ENCODE measurements at regions of chr20 and their contacts with region 1.

Region 1: GRCh38 chr20:56551571-56551970 is 18.5 kb downstream of the FAM209B start:
- DNase-seq: no peak
- ATAC-seq: no peak

Region 2: DNA sequence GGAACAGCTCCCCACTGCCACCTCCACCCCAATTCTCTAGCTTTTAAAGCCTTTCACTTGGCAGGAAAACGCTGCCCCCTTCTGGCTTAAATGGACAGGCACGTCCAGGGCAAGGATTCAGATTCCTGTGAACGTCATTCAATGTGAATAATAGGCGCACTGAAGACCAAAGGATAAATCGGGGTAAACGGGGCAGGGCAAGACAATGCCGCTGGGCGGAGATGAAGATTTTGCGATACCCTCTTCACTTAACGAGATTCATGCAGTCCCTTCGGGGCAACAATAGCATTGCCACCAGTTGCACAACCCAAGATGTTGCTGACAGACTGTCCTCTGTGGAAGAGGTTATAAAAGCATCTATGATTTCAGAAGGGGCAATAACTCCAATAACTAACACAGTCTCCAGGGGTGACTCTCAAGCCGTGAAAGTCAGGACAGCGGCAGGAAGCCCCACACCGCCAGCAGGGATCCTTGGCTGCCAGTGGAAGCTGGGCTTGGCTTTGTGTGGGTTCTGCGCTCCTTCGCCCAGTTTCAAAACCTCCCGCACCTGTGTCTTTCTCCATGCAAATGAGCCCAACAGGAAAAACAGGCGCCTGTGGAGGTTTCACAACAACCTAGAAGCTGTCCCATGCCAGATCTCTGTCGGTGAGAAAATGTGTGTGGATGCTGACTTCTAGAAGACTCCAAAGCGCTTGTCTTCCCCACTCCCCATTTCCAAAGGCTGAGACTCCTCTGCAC is 423.1 kb after region 1 on chr20:
- intact Hi-C with region 1: loop called in 1 of 2 experiments (anchors 2 kb)
- DNase-seq: peak; percentile 38 to 59
- ATAC-seq: peak; percentile 35

Region 3: DNA sequence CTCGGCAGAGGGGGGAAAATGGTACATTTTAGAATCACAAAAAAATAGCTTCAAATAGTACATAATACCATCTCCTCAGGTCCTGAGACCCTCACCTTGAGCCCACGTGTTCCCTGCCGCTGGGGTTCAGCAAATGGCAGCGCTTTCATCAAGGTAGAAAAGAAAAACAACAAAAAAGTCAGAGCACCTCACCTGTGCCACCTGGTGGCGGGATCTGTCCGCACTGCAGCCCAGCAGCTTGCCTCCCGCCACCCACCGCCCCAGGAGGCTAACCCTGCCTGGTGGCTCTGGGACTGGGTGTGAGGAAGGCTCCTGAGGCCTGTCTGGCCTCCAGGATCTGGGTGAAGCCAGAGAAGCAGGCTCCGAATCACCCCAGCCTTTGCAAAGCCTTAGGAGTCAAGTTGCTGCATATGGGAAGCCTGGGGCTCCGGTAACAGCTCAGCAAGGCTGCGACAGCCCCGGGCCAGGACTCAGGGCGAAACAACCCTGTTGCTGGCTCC is 444.1 kb after region 1 on chr20:
- intact Hi-C with region 1: no loop called
- DNase-seq: peak in 1 of 2 donors; percentile 28
- ATAC-seq: no peak